Endothelial cell of umbilical vein (primary cell): ENCODE measurements at regions of chr15 and their contacts with region 1.

Region 1: DNA sequence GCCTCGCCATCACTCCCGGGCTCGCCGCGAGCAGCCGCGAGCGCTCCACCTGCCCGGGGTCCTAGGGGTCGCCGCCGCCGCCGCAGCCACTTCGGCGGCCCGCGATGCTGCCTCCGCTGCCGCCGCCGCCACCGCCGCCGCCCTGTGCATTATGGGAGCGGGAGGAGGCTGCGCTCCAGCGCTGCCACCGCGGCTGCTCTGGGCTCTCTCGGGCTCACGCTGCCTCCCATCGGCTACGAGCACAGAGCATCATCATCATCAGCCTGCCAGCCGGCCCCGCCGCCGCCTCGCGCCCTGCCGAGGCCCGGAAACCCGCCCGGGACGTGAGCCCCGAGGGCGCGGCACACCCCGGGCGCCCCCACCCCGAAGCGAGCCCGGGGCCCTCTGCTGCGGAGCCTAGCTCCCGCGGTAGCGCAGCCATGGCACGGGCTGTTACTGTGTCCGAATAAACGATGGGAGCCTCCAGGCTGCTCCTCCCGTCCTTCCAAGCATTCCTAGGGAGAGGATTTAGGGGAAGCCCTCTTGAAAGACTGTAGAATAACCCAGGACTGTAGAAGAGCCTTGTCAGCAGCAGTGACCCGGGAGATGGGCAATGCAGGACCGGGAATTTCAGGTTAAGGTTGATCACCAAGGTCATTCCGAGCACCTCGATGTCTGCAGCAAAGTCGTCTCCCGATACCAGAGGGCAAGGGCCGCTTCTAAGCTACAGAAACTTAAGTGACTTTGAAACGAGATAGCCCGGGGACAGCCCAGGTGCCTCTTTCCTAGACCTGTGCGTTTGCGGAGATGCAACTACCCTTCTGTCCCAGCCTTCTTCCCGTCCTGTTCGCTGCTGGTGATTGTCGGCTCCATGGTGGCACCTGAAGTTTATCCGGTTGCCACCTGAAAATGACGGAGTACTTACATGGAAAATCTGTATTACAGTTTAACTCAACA is 579 bp upstream of the MYO5A start:
- DNase-seq: peak; percentile 75
- H3K4me3 ChIP-seq: peak overlapping the region; percentile 32 to 89 (median 58)
- H3K27ac ChIP-seq: no peak overlapping the region
- H3K4me1 ChIP-seq: peaks cover 17% of the 10 kb centered on the region
- H3K27me3 ChIP-seq: no peaks in the 10 kb centered on the region
- CTCF ChIP-seq: peak in 1 of 2 donors; percentile 11
- POLR2A ChIP-seq: no peak

Region 2: GRCh38 chr15:51849860-51850259 is 679.4 kb before region 1 on chr15:
- CTCF ChIA-PET with region 1: no interaction called
- POLR2A ChIA-PET with region 1: no interaction called
- dilution Hi-C with region 1: no loop called
- intact Hi-C with region 1: no loop called
- DNase-seq: no peak
- H3K4me3 ChIP-seq: no peak overlapping the region
- H3K27ac ChIP-seq: no peak overlapping the region
- H3K4me1 ChIP-seq: peaks cover 42% of the 10 kb centered on the region
- H3K27me3 ChIP-seq: no peaks in the 10 kb centered on the region
- CTCF ChIP-seq: no peak
- POLR2A ChIP-seq: no peak

Region 3: DNA sequence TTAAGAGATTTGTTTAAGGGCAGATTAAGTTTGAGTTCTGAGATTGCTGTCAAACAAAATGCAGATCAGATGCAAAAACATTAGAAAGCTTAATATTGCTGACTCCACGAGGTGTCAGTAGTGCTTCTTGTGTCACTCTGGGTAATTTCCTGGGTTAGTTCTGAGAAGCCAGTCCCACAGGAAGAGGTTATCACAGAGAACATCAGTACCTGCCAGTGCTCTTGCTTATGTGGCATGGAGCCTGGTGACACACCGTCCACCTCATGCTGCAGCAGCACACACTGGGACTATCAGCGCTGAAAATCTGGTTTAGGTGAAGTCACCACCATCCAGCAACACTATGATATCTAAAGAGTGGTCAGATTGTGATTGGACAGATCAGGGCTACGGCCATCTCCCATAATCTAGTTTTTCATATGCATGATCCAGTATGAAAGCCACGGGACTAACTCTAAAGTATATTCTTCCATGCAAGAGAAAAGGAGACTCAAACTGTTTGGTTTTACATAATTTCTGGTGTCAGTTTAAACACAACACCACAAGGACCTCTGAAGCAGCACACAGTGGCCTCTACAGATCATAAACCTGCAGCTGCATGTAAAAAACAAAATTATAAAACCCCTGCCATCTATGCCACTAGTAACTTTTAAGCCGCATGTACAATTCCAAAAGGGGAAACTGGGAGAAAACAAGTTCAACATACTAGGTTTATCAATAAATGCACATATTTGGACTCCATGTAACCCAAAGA is 197.6 kb before region 1 on chr15:
- CTCF ChIA-PET with region 1: interaction called, 5 read pairs
- POLR2A ChIA-PET with region 1: no interaction called
- dilution Hi-C with region 1: no loop called
- intact Hi-C with region 1: loop called (anchors 1 kb)
- DNase-seq: peak; percentile 68
- H3K4me3 ChIP-seq: no peak overlapping the region
- H3K27ac ChIP-seq: no peak overlapping the region
- H3K4me1 ChIP-seq: peaks cover 6% of the 10 kb centered on the region
- H3K27me3 ChIP-seq: no peaks in the 10 kb centered on the region
- CTCF ChIP-seq: peak; percentile 36 to 45
- POLR2A ChIP-seq: no peak

Region 4: GRCh38 chr15:52481915-52482314 is 47.3 kb before region 1 on chr15:
- CTCF ChIA-PET with region 1: interaction called, 5 read pairs
- POLR2A ChIA-PET with region 1: no interaction called
- dilution Hi-C with region 1: no loop called
- intact Hi-C with region 1: loop called (anchors 2 kb)
- DNase-seq: peak; percentile 75
- H3K4me3 ChIP-seq: no peak overlapping the region
- H3K27ac ChIP-seq: peak overlapping the region; percentile 92
- H3K4me1 ChIP-seq: peaks cover 63% of the 10 kb centered on the region
- H3K27me3 ChIP-seq: no peaks in the 10 kb centered on the region
- CTCF ChIP-seq: no peak
- POLR2A ChIP-seq: peak; percentile 44

Region 5: GRCh38 chr15:52491472-52491871 is 37.8 kb before region 1 on chr15:
- CTCF ChIA-PET with region 1: interaction called, 4 read pairs
- POLR2A ChIA-PET with region 1: no interaction called
- dilution Hi-C with region 1: no loop called
- intact Hi-C with region 1: loop called (anchors 2 kb)
- DNase-seq: peak; percentile 95
- H3K4me3 ChIP-seq: peak overlapping the region in 1 of 3 experiments; percentile 40
- H3K27ac ChIP-seq: peak overlapping the region; percentile 97
- H3K4me1 ChIP-seq: peaks cover 75% of the 10 kb centered on the region
- H3K27me3 ChIP-seq: no peaks in the 10 kb centered on the region
- CTCF ChIP-seq: no peak
- POLR2A ChIP-seq: no peak